ENCODE measurements at regions of chr3 and their contacts with region 1.

Region 1: GRCh38 chr3:32467333-32468070 is 35.1 kb downstream of the CMTM6 start:
- DNase-seq: peak; percentile 64 to 82
- ATAC-seq: peak; percentile 91 to 95
- H3K4me3 ChIP-seq: no peak overlapping the region
- H3K27ac ChIP-seq: no peak overlapping the region
- H3K4me1 ChIP-seq: peaks cover 17% of the 10 kb centered on the region
- CTCF ChIP-seq: peak; percentile 97
- EP300 ChIP-seq: no peak
- POLR2A ChIP-seq: no peak
- RAD21 ChIP-seq: peak; percentile 81 to 88

Region 2: DNA sequence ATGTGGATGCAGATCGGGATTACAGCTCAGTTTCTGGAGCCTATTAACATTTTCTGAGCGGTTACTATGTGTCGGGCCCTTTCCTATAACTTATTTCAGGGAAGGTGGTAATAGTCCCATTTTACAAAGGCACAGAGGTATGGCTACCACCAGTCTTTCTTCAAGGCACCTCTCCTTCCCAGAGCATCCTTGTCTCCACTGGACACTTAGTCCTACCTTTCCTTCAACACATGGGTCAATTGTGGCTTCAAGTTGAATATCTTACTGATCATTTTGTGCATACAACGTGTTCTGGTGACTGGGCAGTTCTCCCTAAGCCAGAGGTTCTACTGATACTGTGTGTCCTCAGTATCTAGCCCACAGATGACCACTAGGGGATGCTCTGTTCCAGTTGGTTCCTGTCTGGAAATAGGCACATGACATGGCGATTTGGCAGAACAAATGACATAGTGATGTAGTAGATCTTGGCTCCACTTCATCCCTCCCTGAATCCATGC is 289.8 kb before region 1 on chr3:
- CTCF ChIA-PET with region 1: interaction called, 37 read pairs
- POLR2A ChIA-PET with region 1: no interaction called
- DNase-seq: peak; percentile 67 to 91
- ATAC-seq: peak; percentile 96 to 98
- H3K4me3 ChIP-seq: no peak overlapping the region
- H3K27ac ChIP-seq: peak overlapping the region in 1 of 2 experiments; percentile 2; a peak in 1 of 6 replicates
- H3K4me1 ChIP-seq: peaks cover 5% of the 10 kb centered on the region; the same call in 1 of the 3 replicates
- CTCF ChIP-seq: peak; percentile 73
- EP300 ChIP-seq: no peak
- POLR2A ChIP-seq: no peak
- RAD21 ChIP-seq: peak; percentile 72 to 84; a peak in 4 of 5 replicates

Region 3: DNA sequence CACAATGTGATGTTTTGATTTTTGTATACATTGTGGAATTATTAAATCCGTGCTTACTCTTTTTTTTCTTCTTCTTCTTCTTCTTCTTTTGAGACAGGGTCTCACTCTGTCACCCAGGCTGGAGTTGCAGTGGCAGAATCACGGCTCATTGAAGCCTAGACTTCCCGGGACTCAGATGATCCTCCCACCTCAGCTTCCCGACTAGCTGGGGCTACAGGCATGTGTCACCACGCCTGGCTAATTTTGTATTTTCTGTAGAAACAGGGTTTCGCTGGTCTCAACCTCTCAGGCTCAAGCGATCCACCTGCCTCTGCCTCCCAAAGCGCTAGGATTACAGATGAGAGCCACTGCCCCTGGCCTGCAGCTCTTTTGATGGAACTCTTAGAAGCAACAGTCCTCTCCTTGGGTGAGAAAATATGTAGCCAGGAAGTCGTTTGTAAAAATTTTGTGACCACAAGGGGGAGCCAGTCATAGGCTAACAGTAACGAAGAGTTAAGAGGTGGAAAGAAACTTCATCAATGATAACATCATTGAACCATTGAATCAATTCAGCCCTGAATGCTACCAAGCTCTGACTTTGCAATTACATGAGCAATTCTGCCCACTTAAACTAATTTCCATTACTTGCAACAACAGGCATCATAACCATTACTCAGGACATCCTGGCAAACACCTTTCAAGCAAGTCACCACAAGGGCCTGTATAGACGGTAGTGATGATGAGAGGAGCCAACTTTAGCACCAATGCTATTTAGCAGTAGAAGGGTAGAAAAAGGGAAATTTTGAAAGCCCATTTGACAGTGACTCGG is 92.5 kb before region 1 on chr3:
- CTCF ChIA-PET with region 1: interaction called, 88 read pairs
- POLR2A ChIA-PET with region 1: no interaction called
- DNase-seq: peak; percentile 54 to 71
- ATAC-seq: peak; percentile 85 to 94
- H3K4me3 ChIP-seq: no peak overlapping the region
- H3K27ac ChIP-seq: no peak overlapping the region
- H3K4me1 ChIP-seq: no peaks in the 10 kb centered on the region
- CTCF ChIP-seq: peak; percentile 75
- EP300 ChIP-seq: no peak
- POLR2A ChIP-seq: no peak
- RAD21 ChIP-seq: peak; percentile 51 to 55

Region 4: DNA sequence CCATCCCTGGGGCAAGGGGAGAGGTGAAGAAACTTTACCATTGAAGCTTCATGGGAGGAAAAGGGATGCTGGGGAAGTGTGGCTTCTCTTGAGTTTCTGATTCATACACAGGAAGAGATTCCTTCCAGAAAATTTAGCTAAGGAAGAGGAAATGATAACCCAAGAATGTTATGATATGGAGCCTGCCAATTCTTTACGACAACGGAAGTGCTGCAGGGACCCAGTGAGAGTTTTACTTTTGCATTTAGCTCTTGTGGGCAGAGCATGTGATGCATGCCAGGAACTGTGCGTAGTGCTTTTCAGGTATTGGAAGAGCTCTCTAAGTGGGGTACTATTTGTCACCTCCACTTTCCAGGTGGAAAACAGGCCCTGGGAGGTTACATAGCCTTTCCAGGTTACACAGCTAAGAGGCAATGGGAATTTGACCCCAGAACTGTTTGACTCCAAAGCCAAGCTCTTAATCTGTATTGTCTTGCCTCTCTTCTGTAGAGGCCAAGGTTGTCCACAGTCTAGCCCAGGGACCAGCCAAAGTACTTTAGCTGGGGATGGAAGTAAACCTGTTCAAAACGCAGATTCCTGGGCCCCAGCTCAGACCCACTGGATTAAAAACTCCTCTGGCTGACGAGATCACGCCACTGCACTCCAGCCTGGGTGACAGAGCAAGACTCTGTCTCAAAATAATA is 52.8 kb before region 1 on chr3:
- CTCF ChIA-PET with region 1: interaction called, 17 read pairs
- POLR2A ChIA-PET with region 1: no interaction called
- DNase-seq: no peak
- ATAC-seq: no peak
- H3K4me3 ChIP-seq: no peak overlapping the region
- H3K27ac ChIP-seq: no peak overlapping the region
- H3K4me1 ChIP-seq: peaks cover under 1% of the 10 kb centered on the region; the same call in 2 of the 3 replicates
- CTCF ChIP-seq: no peak
- EP300 ChIP-seq: no peak
- POLR2A ChIP-seq: no peak
- RAD21 ChIP-seq: no peak

Region 5: GRCh38 chr3:32428092-32429068 is 39.1 kb before region 1 on chr3:
- CTCF ChIA-PET with region 1: interaction called, 18 read pairs
- POLR2A ChIA-PET with region 1: no interaction called
- DNase-seq: no peak
- ATAC-seq: peak in 1 of 2 experiments; percentile 43; a peak in 2 of 6 replicates
- H3K4me3 ChIP-seq: no peak overlapping the region
- H3K27ac ChIP-seq: no peak overlapping the region
- H3K4me1 ChIP-seq: no peaks in the 10 kb centered on the region
- CTCF ChIP-seq: no peak
- EP300 ChIP-seq: no peak
- POLR2A ChIP-seq: no peak
- RAD21 ChIP-seq: no peak

Region 6: DNA sequence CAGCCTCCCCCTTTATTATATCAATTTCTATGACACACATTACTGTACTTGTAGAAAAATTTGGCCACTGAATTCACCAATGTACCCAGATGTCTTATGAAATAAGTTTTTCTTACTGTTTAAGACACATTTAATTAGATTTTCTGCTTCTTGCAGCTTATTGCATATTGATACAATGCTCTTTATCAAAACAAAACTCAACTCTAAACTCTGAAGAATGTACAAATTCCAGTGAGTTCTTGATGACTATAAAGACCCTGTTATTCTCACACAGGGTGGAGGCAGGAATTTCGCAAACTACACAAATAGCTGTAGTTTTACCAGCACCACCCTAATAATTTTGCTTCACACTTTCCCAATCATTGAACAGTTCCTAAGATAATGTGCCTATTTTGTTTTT is 13.1 kb after region 1 on chr3:
- CTCF ChIA-PET with region 1: interaction called, 47 read pairs
- POLR2A ChIA-PET with region 1: no interaction called
- DNase-seq: no peak
- ATAC-seq: no peak
- H3K4me3 ChIP-seq: no peak overlapping the region
- H3K27ac ChIP-seq: no peak overlapping the region
- H3K4me1 ChIP-seq: no peaks in the 10 kb centered on the region
- CTCF ChIP-seq: no peak
- EP300 ChIP-seq: no peak
- POLR2A ChIP-seq: no peak
- RAD21 ChIP-seq: no peak

Measured in A549 (cell line).